KBM-7 (cell line): ENCODE measurements at regions of chr6 and their contacts with region 1.

Region 1: GRCh38 chr6:108541838-108542759 is 18.6 kb upstream of the FOXO3 start:
- DNase-seq: peak; percentile 87

Region 2: DNA sequence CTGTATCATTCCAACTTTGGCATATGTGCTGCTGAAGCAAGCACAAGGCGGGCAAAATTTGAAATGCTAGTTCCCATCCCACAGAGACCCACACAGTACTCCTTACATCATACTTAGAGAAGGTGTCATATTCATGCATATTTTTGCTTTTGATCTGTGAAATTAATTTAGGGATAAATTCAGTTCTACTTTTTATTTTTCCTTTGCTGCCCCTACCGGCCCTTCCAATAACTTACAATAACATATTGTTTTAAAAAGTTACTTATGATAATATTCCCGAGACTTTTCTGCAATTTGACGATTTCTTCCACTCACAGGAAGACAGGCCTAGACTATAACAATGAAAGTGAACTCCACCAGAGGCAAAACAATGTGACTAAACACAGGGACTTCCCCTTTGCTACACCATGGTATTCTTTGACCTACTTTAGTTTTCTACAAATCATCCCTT is 517.5 kb after region 1 on chr6:
- in situ Hi-C with region 1: loop called (anchors 10 kb)
- DNase-seq: peak; percentile 52

Region 3: GRCh38 chr6:109299776-109300564 is 757.9 kb after region 1 on chr6:
- in situ Hi-C with region 1: no loop called
- DNase-seq: peak; percentile 81

Region 4: DNA sequence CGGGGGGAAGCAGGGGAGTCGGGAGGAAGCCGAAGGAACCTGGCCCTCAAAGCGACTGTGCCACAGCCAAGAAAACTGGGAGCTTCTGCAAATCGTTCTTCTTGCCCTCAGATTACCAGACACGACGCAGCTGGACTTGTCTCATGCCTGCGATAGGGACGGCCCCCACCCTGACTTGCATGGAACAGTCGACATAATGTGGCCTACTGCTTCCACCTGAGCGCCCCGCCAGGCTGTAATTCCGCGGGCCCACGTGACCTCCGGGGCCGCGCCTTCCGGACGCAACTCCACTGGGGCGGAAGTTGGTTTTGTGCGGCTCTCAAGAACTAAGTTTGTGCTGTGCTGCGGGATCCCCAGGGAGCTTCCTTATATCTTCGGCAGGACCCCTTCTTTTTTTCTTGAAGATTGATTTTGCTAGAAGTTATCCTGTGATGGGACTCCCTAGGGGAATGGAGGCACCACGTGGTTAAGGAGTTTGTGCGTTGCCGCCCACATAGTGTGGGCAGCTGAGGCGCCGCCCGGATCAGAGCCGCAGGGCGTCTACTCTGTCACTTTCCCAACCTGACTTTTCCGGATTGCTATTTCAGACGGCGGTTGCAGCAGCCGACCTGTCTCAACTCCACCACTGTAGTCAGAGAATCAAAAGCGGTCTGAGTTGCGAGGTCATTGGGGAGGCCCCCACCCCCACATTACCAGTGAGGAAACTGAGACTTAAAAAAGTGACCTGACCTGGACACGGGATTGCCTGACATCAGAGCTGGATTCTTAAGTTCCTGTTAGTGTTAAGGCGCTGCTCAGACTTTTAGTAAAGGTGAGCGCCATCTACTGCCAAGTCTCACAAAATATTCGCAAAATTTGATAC is 840.7 kb after region 1 on chr6:
- in situ Hi-C with region 1: loop called (anchors 25 kb)
- DNase-seq: peak; percentile 98